ENCODE measurements at regions of chr9 and their contacts with region 1.

Region 1: GRCh38 chr9:95875305-95876137 is at the start of gene ERCC6L2:
- DNase-seq: peak; percentile 85 to 98 (median 90)

Region 2: DNA sequence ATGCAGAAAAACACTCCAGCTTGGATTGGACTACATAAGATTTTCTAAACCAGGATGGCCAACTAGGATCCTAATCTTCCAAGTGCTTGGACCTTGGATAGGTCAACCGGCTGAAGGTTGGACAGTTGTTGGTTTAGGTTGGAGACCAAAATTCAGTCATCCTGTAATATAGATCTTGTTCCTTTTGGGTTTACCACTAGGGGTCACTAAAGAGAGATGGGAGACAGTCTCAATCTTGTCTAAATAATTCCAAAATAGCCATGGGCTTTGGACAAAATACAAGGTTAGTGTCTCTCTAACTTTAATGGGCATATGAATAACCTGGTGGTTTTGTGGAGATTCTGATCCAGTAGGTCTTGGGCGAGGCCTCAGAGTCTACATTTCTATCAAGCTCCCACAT is 148.8 kb before region 1 on chr9:
- intact Hi-C with region 1: loop called (anchors 10 kb)
- DNase-seq: no peak

Region 3: GRCh38 chr9:95756986-95757385 is 118.5 kb before region 1 on chr9:
- intact Hi-C with region 1: no loop called
- DNase-seq: no peak

Region 4: GRCh38 chr9:96116275-96117064 is 240.9 kb after region 1 on chr9:
- intact Hi-C with region 1: loop called (anchors 10 kb)
- DNase-seq: peak; percentile 80 to 98 (median 88)

Measured in posterior cingulate gyrus (tissue), 11 donors.